BJ (cell line): ENCODE measurements at regions of chr3 and their contacts with region 1.

Region 1: GRCh38 chr3:136390574-136390973 is 140.4 kb downstream of the PCCB start:
- DNase-seq: no peak
- H3K4me3 ChIP-seq: no peak overlapping the region
- H3K27me3 ChIP-seq: no peaks in the 10 kb centered on the region
- CTCF ChIP-seq: no peak

Region 2: DNA sequence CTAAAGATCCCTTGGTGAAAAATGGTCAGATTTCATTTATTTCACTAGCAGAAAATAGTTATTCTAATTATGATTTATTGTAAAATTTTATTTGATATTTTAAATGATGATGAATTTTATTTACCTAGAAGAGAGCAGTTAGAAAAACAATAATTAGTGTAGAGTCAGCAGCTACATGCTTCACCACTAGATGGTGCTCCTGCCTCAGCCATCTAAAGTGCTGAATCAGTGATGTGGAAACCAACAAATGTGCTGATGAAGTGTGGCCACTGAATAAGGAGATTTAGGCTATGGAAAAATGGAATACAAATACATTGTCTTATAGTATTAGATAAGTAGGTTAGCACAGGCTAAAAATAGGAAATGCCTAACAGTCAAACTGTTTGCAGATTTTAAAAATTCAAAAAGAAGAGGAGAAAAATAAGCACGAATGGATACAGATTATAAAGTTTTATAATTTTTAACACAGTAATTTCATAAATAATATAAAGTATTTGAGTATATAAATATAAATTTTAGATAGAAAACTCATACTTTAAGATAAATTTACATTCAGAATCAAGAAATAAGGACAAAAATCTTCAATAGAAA is 315.3 kb before region 1 on chr3:
- CTCF ChIA-PET with region 1: interaction called, 16 read pairs
- POLR2A ChIA-PET with region 1: no interaction called
- DNase-seq: no peak
- H3K4me3 ChIP-seq: no peak overlapping the region
- H3K27me3 ChIP-seq: no peaks in the 10 kb centered on the region
- CTCF ChIP-seq: peak; percentile 84

Region 3: GRCh38 chr3:136380530-136380929 is 10.0 kb before region 1 on chr3:
- CTCF ChIA-PET with region 1: interaction called, 17 read pairs
- POLR2A ChIA-PET with region 1: no interaction called
- DNase-seq: no peak
- H3K4me3 ChIP-seq: no peak overlapping the region
- H3K27me3 ChIP-seq: no peaks in the 10 kb centered on the region
- CTCF ChIP-seq: no peak